ENCODE measurements at regions of chr5 and their contacts with region 1.

Region 1: GRCh38 chr5:90438100-90438499 is 28.5 kb upstream of the CETN3 start:
- DNase-seq: no peak
- ATAC-seq: no peak

Region 2: GRCh38 chr5:90233476-90233875 is 204.6 kb before region 1 on chr5:
- intact Hi-C with region 1: no loop called
- DNase-seq: no peak
- ATAC-seq: no peak

Region 3: GRCh38 chr5:90783460-90784333 is 345.6 kb after region 1 on chr5:
- intact Hi-C with region 1: loop called (anchors 5 kb)
- DNase-seq: peak; percentile 40
- ATAC-seq: peak; percentile 50

Measured in left ventricle myocardium superior (tissue), 1 donor.